ENCODE measurements at regions of chr16 and their contacts with region 1.

Region 1: GRCh38 chr16:72832621-72833248 is 215.2 kb downstream of the ZFHX3 start:
- DNase-seq: peak; percentile 76
- ATAC-seq: peak; percentile 71
- H3K4me3 Mint-ChIP-seq: no peak overlapping the region
- H3K27ac Mint-ChIP-seq: no peak overlapping the region
- H3K4me1 Mint-ChIP-seq: peaks cover 5% of the 10 kb centered on the region
- H3K27me3 Mint-ChIP-seq: no peaks in the 10 kb centered on the region

Region 2: DNA sequence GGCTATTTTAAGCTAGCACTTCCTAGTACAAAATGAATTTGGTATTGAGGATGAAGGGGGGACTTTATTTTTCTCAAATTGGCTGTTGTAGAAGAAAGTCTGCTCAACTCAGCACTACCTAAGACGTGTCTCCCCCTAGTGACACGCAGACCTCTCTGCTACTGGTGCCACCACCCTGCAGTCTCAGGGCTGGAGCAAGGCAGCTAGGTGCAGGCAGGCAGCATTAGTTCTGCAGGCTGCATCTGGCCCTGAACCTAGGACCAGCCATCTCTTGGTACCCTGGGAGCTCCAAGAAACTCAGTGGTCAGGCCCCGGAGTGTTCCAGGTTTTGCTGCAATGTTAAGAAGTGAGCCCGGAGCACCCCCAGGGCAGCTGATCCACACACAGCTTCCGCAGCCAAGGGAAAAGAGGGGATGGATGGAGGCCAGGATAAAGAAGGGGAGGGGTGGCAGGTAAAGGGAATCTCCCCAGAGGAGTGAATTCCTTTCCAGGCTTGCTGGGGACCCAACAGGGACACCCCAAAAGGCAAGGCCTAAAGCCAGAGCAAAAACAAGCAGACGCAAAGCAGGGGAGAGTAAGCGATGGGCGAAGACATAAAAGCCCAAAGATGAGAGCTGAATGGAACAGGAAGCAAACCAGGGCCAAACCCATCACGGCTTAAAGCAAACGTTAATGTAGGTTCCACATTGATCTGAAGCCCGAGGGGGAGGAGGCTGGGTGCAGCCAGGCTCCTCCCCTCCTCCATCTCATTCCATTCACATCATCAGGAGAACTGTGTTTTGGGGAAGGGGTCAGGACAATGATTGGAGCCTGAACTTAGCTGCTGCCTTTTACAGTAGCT is 14.7 kb after region 1 on chr16:
- CTCF ChIA-PET with region 1: interaction called, 26 read pairs
- DNase-seq: peak; percentile 53
- ATAC-seq: no peak
- H3K4me3 Mint-ChIP-seq: no peak overlapping the region
- H3K27ac Mint-ChIP-seq: no peak overlapping the region
- H3K4me1 Mint-ChIP-seq: peaks cover 31% of the 10 kb centered on the region
- H3K27me3 Mint-ChIP-seq: peaks cover 14% of the 10 kb centered on the region

Region 3: GRCh38 chr16:72856797-72857196 is 24.1 kb after region 1 on chr16:
- CTCF ChIA-PET with region 1: interaction called, 24 read pairs
- DNase-seq: no peak
- ATAC-seq: no peak
- H3K4me3 Mint-ChIP-seq: no peak overlapping the region
- H3K27ac Mint-ChIP-seq: no peak overlapping the region
- H3K4me1 Mint-ChIP-seq: peaks cover 3% of the 10 kb centered on the region
- H3K27me3 Mint-ChIP-seq: peaks cover 15% of the 10 kb centered on the region

Region 4: DNA sequence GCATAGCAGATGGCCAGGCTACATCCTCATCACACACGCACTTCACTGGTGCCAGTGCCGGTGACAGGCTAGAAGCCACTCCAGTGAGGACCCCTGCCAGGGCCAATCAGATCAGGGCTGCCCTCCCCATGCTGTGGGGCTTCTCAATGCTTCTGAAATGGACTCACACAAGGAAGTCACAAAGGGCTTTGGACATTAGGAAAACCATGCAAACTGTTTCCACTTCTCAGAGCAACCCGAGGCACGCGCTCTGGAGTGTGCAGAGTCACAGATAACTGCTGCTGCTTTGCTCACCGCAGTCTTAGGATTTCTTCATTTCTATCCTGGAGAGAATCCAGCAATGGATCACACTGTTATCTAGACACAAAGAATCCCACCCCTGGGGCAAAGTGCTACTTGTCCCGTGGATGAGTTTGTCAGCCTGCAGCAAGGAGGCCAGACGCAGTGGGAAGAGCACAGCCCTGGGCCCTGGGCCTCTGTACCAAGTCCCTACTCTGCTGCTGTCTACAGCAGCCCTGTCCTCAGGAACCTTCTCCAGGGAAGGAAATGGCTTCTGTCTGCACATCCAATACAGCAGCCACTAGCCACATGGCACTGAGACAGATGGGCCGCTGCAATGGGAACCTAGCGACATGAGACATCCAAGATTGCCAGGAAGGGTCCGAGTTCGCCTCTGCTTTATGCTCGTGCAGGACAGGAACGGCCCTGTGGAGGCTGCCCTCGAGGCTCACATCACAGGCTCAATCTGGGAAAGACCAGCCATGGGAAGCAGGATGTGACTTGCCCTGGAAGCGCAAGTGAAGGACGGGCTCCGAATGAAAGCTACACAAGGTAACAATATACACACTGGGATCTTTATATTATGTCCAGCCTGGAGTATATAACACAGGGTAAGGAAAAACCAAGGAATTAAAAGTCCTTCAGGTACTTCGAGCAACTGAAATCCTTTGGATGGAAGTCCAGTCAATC is 45.9 kb after region 1 on chr16:
- CTCF ChIA-PET with region 1: no interaction called
- DNase-seq: no peak
- ATAC-seq: no peak
- H3K4me3 Mint-ChIP-seq: no peak overlapping the region
- H3K27ac Mint-ChIP-seq: no peak overlapping the region
- H3K4me1 Mint-ChIP-seq: peaks cover 14% of the 10 kb centered on the region
- H3K27me3 Mint-ChIP-seq: peaks cover 4% of the 10 kb centered on the region

Region 5: DNA sequence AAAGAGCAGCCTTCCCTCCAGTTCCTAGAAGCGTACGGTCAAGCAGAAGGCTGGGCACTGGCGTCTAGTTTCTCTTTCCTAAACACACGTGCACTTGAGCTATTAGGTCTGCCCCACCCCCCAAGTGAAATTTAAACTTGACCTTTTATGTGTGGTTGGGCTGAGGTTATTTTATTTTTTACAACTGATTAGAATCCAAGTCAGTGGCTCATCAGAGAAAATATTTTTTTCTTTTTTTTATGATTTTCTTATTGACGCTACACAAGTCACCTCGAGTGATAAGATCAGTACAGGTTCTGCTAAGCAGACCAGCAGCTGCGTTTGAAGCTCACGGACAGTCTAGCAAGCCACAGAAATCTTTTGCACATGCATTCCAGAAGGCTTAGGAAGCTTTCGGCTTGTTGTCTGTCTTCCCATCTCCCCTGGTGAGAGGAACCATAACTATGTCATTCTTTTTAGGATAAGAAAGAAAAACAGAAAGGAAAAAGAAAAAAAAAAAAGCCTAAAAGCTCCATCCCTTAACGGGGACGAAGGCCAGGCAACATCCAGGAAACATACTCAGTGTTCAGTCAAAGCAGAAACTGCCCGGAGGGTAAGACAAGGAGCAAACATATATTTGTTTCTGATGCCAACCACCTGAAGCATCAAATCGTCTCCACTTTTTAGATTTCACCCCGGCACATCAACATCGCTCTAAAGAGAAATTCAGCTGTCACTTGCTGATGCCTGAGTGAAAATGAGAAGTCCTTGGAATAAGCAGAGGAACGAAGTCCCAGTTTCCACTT is 120.3 kb after region 1 on chr16:
- CTCF ChIA-PET with region 1: no interaction called
- DNase-seq: no peak
- ATAC-seq: no peak
- H3K4me3 Mint-ChIP-seq: no peak overlapping the region
- H3K27ac Mint-ChIP-seq: no peak overlapping the region
- H3K4me1 Mint-ChIP-seq: no peaks in the 10 kb centered on the region
- H3K27me3 Mint-ChIP-seq: no peaks in the 10 kb centered on the region